HCT116 (cell line): ENCODE measurements at regions of chr4 and their contacts with region 1.

Region 1: GRCh38 chr4:121307445-121308327 is 73.1 kb downstream of the QRFPR start:
- DNase-seq: peak; percentile 63
- ATAC-seq: peak; percentile 91
- H3K4me3 ChIP-seq: no peak overlapping the region
- H3K27ac ChIP-seq: no peak overlapping the region
- H3K4me1 ChIP-seq: peaks cover 0 to 4% of the 10 kb centered on the region in 2 experiments; a peak in 1 of 4 replicates
- H3K27me3 ChIP-seq: no peaks in the 10 kb centered on the region
- CTCF ChIP-seq: peak; percentile 76 to 93 (median 84)
- POLR2A ChIP-seq: no peak
- RAD21 ChIP-seq: peak; percentile 89

Region 2: DNA sequence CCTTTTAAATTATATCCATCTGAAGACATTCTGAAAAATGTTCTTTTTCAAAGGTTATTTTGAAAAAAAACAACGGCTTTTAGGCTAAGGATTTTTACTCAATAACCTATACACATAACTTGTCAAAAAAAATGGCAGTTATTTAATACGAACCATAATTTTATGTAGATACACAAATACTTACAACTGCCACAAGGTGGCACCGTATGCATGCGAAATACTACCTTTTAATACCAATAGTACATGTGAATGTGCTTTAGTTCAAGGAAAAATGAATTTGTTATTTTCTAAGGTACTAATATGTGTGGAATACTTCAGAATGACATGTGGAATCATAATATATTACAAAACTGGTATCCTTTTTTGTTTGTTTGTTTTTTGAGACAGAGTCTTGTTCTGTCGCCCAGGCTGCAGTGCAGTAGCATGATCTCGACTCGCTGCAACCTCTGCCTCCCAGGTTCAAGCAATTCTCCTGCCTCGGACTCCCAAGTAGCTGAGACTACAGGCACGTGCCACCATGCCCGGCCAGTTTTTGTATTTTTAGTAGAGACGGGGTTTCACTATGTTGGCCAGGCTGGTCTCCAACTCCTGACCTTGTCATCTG is 1236.4 kb before region 1 on chr4:
- CTCF ChIA-PET with region 1: no interaction called
- POLR2A ChIA-PET with region 1: no interaction called
- RAD21 ChIA-PET with region 1: no interaction called
- intact Hi-C with region 1: loop called (anchors 1 kb)
- DNase-seq: peak; percentile 57
- ATAC-seq: no peak
- H3K4me3 ChIP-seq: no peak overlapping the region
- H3K27ac ChIP-seq: no peak overlapping the region
- H3K4me1 ChIP-seq: peaks cover 2 to 8% of the 10 kb centered on the region in 2 experiments; a peak in 2 of 4 replicates
- H3K27me3 ChIP-seq: no peaks in the 10 kb centered on the region
- CTCF ChIP-seq: peak; percentile 38 to 70 (median 48); a peak in 4 of 6 replicates
- POLR2A ChIP-seq: no peak
- RAD21 ChIP-seq: peak; percentile 79

Region 3: GRCh38 chr4:120718979-120719566 is 588.6 kb before region 1 on chr4:
- CTCF ChIA-PET with region 1: no interaction called
- POLR2A ChIA-PET with region 1: no interaction called
- RAD21 ChIA-PET with region 1: no interaction called
- intact Hi-C with region 1: loop called (anchors 10 kb)
- DNase-seq: peak; percentile 16
- ATAC-seq: peak; percentile 97
- H3K4me3 ChIP-seq: no peak overlapping the region
- H3K27ac ChIP-seq: no peak overlapping the region
- H3K4me1 ChIP-seq: no peaks in the 10 kb centered on the region
- H3K27me3 ChIP-seq: no peaks in the 10 kb centered on the region
- CTCF ChIP-seq: peak; percentile 53 to 73 (median 71); a peak in 5 of 6 replicates
- POLR2A ChIP-seq: no peak
- RAD21 ChIP-seq: peak; percentile 67

Region 4: GRCh38 chr4:121096629-121097028 is 211.1 kb before region 1 on chr4:
- CTCF ChIA-PET with region 1: no interaction called
- POLR2A ChIA-PET with region 1: no interaction called
- RAD21 ChIA-PET with region 1: no interaction called
- intact Hi-C with region 1: loop called (anchors 5 kb)
- DNase-seq: peak; percentile 24
- ATAC-seq: no peak
- H3K4me3 ChIP-seq: no peak overlapping the region
- H3K27ac ChIP-seq: no peak overlapping the region
- H3K4me1 ChIP-seq: no peaks in the 10 kb centered on the region
- H3K27me3 ChIP-seq: no peaks in the 10 kb centered on the region
- CTCF ChIP-seq: peak; percentile 21 to 59 (median 57); a peak in 4 of 6 replicates
- POLR2A ChIP-seq: no peak
- RAD21 ChIP-seq: peak; percentile 80

Region 5: DNA sequence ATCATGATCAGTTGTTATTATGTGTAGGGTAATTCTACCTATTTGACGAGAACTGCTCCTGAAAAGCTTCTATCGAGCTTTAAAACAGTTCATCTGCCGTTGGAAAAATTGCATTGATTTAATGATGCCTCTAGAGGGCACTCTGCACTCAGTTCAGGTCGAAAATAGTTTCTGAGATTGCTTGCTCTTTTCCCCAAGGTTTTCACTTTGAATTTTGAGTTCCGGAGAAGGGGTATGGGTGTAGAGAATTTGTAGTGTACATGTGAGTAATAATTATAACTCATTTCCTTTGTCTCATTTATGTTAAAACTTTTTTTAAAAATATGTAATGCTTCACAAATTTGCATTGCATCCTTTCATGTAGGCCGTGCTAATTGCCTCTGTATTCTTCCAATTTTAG is 115.2 kb before region 1 on chr4:
- CTCF ChIA-PET with region 1: interaction called, 26 read pairs
- POLR2A ChIA-PET with region 1: no interaction called
- RAD21 ChIA-PET with region 1: interaction called, 3 to 4 read pairs
- intact Hi-C with region 1: loop called (anchors 1 kb)
- DNase-seq: peak; percentile 33
- ATAC-seq: peak; percentile 70
- H3K4me3 ChIP-seq: no peak overlapping the region
- H3K27ac ChIP-seq: no peak overlapping the region
- H3K4me1 ChIP-seq: peaks cover 0 to 3% of the 10 kb centered on the region in 2 experiments; a peak in 1 of 4 replicates
- H3K27me3 ChIP-seq: no peaks in the 10 kb centered on the region
- CTCF ChIP-seq: peak; percentile 66 to 78 (median 68)
- POLR2A ChIP-seq: no peak
- RAD21 ChIP-seq: peak; percentile 76